CD8-positive, alpha-beta T cell (primary cell): ENCODE measurements at regions of chr7 and their contacts with region 1.

Region 1: GRCh38 chr7:142478479-142479072 is 220.7 kb upstream of the PRSS58 start:
- DNase-seq: peak in 3 of 9 experiments; percentile 32 to 67 (median 56)
- ATAC-seq: peak; percentile 39
- H3K4me3 ChIP-seq: no peak overlapping the region
- H3K4me3 Mint-ChIP-seq: no peak overlapping the region
- H3K27ac ChIP-seq: no peak overlapping the region
- H3K27ac Mint-ChIP-seq: peak overlapping the region; percentile 53
- H3K4me1 ChIP-seq: peaks cover 80% of the 10 kb centered on the region
- H3K4me1 Mint-ChIP-seq: peaks cover 80% of the 10 kb centered on the region
- H3K27me3 ChIP-seq: no peaks in the 10 kb centered on the region
- H3K27me3 Mint-ChIP-seq: no peaks in the 10 kb centered on the region
- CTCF ChIP-seq: peak; percentile 68

Region 2: GRCh38 chr7:142438235-142438922 is 40.2 kb before region 1 on chr7:
- CTCF ChIA-PET with region 1: interaction called, 10 read pairs
- POLR2A ChIA-PET with region 1: no interaction called
- intact Hi-C with region 1: no loop called
- DNase-seq: peak in 2 of 9 experiments; percentile 44 to 58
- ATAC-seq: no peak
- H3K4me3 ChIP-seq: no peak overlapping the region
- H3K4me3 Mint-ChIP-seq: no peak overlapping the region
- H3K27ac ChIP-seq: no peak overlapping the region
- H3K27ac Mint-ChIP-seq: no peak overlapping the region
- H3K4me1 ChIP-seq: peaks cover 12% of the 10 kb centered on the region
- H3K4me1 Mint-ChIP-seq: peaks cover 50% of the 10 kb centered on the region
- H3K27me3 ChIP-seq: no peaks in the 10 kb centered on the region
- H3K27me3 Mint-ChIP-seq: no peaks in the 10 kb centered on the region
- CTCF ChIP-seq: peak; percentile 42

Region 3: GRCh38 chr7:142496545-142497041 is 18.0 kb after region 1 on chr7:
- CTCF ChIA-PET with region 1: interaction called, 31 read pairs
- POLR2A ChIA-PET with region 1: interaction called, 3 read pairs
- intact Hi-C with region 1: loop called in 1 of 2 experiments (anchors 2 kb)
- DNase-seq: peak in 2 of 9 experiments; percentile 46 to 67
- ATAC-seq: peak; percentile 56
- H3K4me3 ChIP-seq: no peak overlapping the region
- H3K4me3 Mint-ChIP-seq: peak overlapping the region; percentile 51
- H3K27ac ChIP-seq: no peak overlapping the region
- H3K27ac Mint-ChIP-seq: peak overlapping the region; percentile 78
- H3K4me1 ChIP-seq: peaks cover 25% of the 10 kb centered on the region
- H3K4me1 Mint-ChIP-seq: peaks cover 57% of the 10 kb centered on the region
- H3K27me3 ChIP-seq: no peaks in the 10 kb centered on the region
- H3K27me3 Mint-ChIP-seq: no peaks in the 10 kb centered on the region
- CTCF ChIP-seq: peak; percentile 74

Region 4: DNA sequence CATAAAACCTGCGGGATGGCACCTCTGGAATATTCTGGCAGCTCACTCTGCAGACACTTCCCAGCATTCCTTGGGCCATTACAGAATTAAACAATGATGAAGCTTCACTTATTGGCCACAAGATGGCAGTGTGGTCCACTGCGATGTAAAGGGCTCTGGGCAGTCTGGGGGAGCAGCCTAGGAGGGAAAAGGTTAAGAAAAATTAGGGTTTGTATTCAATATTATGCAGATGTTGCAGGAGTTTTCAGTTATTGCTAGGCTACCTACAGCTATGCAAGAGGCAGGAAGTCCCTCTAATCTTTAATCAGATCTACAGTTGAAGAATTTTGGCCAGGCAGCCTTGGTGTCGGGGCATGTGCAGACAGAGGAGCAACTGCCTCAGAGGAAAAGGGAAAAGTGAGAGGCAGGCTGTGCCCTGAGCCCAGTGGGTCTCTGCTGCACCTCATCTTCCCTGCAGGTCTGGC is 37.5 kb after region 1 on chr7:
- CTCF ChIA-PET with region 1: interaction called, 14 read pairs
- POLR2A ChIA-PET with region 1: no interaction called
- intact Hi-C with region 1: loop called in 1 of 2 experiments (anchors 5 kb)
- DNase-seq: peak in 4 of 9 experiments; percentile 26 to 75 (median 46)
- ATAC-seq: peak; percentile 68
- H3K4me3 ChIP-seq: no peak overlapping the region
- H3K4me3 Mint-ChIP-seq: no peak overlapping the region
- H3K27ac ChIP-seq: no peak overlapping the region
- H3K27ac Mint-ChIP-seq: no peak overlapping the region
- H3K4me1 ChIP-seq: peaks cover 25% of the 10 kb centered on the region
- H3K4me1 Mint-ChIP-seq: peaks cover 48% of the 10 kb centered on the region
- H3K27me3 ChIP-seq: no peaks in the 10 kb centered on the region
- H3K27me3 Mint-ChIP-seq: no peaks in the 10 kb centered on the region
- CTCF ChIP-seq: peak; percentile 66

Region 5: GRCh38 chr7:142939226-142939910 is 460.8 kb after region 1 on chr7 and contains the start of gene LLCFC1:
- CTCF ChIA-PET with region 1: no interaction called
- POLR2A ChIA-PET with region 1: no interaction called
- intact Hi-C with region 1: no loop called
- DNase-seq: peak in 2 of 9 experiments; percentile 22 to 25
- ATAC-seq: no peak
- H3K4me3 ChIP-seq: no peak within 1 kb of the TSS
- H3K4me3 Mint-ChIP-seq: no peak within 1 kb of the TSS
- H3K27ac ChIP-seq: no peak within 1 kb of the TSS
- H3K27ac Mint-ChIP-seq: no peak within 1 kb of the TSS
- H3K4me1 ChIP-seq: no peaks in the 10 kb centered on the region
- H3K4me1 Mint-ChIP-seq: no peaks in the 10 kb centered on the region
- H3K27me3 ChIP-seq: peaks cover 0 to 3% of the 10 kb centered on the region in 2 experiments
- H3K27me3 Mint-ChIP-seq: peaks cover 12% of the 10 kb centered on the region
- CTCF ChIP-seq: no peak
- total RNA-seq, gene LLCFC1: not detected